Naive thymus-derived CD8-positive, alpha-beta T cell (primary cell): ENCODE measurements at regions of chr5 and their contacts with region 1.

Region 1: DNA sequence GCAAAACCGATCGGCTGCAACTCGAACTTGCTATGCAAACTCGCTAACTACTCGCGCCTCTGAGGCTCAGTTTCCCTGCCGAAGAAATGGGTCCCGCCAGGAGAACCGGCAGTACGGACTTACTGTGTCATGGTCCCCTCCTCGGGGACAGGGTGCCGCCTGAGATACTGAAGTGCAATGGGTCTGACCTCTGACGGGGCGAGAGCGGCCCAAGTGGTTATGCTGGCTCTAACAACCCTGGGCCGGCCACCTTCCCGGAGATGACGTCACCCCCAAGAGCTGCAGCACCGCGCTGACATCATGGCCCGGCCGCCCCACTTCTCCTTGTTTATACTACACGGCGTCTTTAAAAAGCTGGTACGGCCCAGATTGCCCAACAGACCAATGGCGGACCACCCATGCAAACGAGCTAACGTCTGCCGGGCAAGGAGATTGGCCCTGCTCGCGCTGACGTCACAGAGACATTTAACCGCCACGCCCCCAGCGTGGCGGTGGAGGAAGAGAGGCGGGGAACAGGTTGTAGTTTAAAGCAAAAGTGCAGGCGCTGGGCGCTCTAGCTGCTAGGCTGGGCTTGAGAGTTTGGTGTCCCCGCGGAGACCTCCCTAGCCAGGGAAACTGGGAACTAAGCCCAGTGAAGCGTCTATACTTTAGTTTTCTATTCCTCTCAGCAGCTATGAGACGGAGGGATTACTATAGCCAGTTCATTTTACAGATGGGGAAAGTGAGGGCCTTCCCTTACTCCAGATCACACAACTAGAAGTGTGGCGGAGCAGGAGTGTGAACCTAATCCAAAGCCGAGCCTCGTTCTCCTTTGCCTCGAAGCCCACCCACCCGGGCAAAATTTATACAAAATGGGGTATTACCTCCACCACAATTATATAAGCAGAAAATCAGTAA is 654 bp upstream of the RNF44 start:
- DNase-seq: peak; percentile 88 to 100 (median 98)
- ATAC-seq: peak; percentile 70 to 77
- H3K4me3 Mint-ChIP-seq: peak overlapping the region; percentile 94 to 100 (median 98)
- H3K27ac Mint-ChIP-seq: peak overlapping the region; percentile 97 to 100 (median 100)
- H3K4me1 Mint-ChIP-seq: peaks cover 54 to 77% (median 71%) of the 10 kb centered on the region in 4 donors
- H3K27me3 Mint-ChIP-seq: no peaks in the 10 kb centered on the region

Region 2: GRCh38 chr5:176388444-176389134 is 149.3 kb before region 1 on chr5 and contains the starts of genes HIGD2A and NOP16:
- POLR2A ChIA-PET with region 1: interaction called, 35 read pairs
- DNase-seq: peak; percentile 96 to 100 (median 98)
- ATAC-seq: peak; percentile 89 to 90
- H3K4me3 Mint-ChIP-seq: peak within 1 kb of the TSS; percentile 86 to 100 (median 99)
- H3K27ac Mint-ChIP-seq: peak within 1 kb of the TSS; percentile 95 to 100 (median 100)
- H3K4me1 Mint-ChIP-seq: peaks cover 17 to 42% (median 37%) of the 10 kb centered on the region in 4 donors
- H3K27me3 Mint-ChIP-seq: no peaks in the 10 kb centered on the region
- polyA plus RNA-seq, gene HIGD2A: 209 to 280 (median 250) TPM
- polyA plus RNA-seq, gene NOP16: 19.1 to 40.5 (median 22.8) TPM

Region 3: DNA sequence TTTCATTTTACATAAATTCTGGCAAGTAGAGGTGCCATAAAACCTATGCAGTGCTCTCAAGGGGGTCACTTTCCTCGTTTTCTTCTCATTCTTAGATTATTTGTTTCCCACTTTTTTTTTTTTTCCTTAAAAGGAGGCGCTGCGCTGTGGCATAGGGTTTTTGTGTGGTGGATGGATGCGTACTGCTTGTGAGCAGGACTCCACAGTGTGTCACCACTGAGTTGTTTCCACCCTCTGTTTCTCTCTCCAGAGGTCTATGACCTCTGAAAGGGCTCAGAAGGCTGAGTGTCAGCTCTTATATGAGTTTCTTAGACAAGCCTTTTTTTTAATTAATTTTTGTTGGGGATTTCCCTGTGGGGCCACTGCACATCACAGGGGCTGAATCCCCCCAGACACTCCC is 107.9 kb before region 1 on chr5:
- POLR2A ChIA-PET with region 1: interaction called, 10 read pairs
- DNase-seq: no peak
- ATAC-seq: peak; percentile 47 to 50
- H3K4me3 Mint-ChIP-seq: peak overlapping the region in 1 of 10 donors; percentile 53
- H3K27ac Mint-ChIP-seq: peak overlapping the region in 5 of 10 donors; percentile 15 to 71 (median 61)
- H3K4me1 Mint-ChIP-seq: peaks cover 3 to 12% (median 7%) of the 10 kb centered on the region in 4 donors
- H3K27me3 Mint-ChIP-seq: peaks cover 0 to 2% (median 0%) of the 10 kb centered on the region in 5 donors

Region 4: DNA sequence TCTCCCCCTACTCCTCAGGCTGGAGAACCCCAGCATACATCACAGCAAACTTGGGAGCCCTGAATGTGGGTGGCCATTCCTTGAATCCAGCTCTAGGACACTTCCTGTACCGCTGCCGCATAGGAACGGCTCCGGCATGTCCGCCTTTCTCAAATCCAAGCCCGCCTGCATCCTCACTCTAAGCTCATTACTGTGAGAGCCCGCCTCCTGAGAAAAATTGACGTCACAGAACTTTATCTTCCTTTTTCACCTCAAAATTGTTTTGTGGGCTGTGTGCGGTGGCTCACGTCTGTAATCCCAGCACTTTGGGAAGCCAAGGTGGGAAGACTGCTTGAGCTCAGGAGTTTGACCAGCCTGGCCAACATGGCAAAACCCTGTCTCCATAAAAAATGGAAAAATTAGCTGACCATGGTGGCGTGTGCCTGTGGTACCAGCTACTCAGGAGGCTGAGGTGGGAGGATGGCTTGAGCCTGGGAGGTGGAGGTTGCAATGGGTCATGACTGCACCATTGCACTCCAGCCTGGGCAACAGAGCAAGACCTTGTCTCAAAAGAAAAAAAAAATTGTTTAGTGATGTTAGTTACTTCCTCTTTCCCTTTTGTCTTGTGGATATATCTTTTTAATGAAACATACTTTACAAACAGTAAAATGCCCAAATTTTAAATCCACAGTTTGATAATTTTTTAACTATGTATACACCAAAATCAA is 23.5 kb before region 1 on chr5:
- POLR2A ChIA-PET with region 1: interaction called, 531 read pairs
- DNase-seq: no peak
- ATAC-seq: no peak
- H3K4me3 Mint-ChIP-seq: no peak overlapping the region
- H3K27ac Mint-ChIP-seq: peak overlapping the region in 6 of 10 donors; percentile 46 to 80 (median 64)
- H3K4me1 Mint-ChIP-seq: peaks cover 13 to 31% (median 20%) of the 10 kb centered on the region in 4 donors
- H3K27me3 Mint-ChIP-seq: no peaks in the 10 kb centered on the region

Region 5: GRCh38 chr5:176636426-176636825 is 98.6 kb after region 1 on chr5:
- POLR2A ChIA-PET with region 1: no interaction called
- DNase-seq: no peak
- ATAC-seq: no peak
- H3K4me3 Mint-ChIP-seq: no peak overlapping the region
- H3K27ac Mint-ChIP-seq: no peak overlapping the region
- H3K4me1 Mint-ChIP-seq: peaks cover 4 to 13% (median 7%) of the 10 kb centered on the region in 4 donors
- H3K27me3 Mint-ChIP-seq: peaks cover 22 to 40% (median 35%) of the 10 kb centered on the region in 5 donors